ENCODE measurements at regions of chr20 and their contacts with region 1.

Region 1: DNA sequence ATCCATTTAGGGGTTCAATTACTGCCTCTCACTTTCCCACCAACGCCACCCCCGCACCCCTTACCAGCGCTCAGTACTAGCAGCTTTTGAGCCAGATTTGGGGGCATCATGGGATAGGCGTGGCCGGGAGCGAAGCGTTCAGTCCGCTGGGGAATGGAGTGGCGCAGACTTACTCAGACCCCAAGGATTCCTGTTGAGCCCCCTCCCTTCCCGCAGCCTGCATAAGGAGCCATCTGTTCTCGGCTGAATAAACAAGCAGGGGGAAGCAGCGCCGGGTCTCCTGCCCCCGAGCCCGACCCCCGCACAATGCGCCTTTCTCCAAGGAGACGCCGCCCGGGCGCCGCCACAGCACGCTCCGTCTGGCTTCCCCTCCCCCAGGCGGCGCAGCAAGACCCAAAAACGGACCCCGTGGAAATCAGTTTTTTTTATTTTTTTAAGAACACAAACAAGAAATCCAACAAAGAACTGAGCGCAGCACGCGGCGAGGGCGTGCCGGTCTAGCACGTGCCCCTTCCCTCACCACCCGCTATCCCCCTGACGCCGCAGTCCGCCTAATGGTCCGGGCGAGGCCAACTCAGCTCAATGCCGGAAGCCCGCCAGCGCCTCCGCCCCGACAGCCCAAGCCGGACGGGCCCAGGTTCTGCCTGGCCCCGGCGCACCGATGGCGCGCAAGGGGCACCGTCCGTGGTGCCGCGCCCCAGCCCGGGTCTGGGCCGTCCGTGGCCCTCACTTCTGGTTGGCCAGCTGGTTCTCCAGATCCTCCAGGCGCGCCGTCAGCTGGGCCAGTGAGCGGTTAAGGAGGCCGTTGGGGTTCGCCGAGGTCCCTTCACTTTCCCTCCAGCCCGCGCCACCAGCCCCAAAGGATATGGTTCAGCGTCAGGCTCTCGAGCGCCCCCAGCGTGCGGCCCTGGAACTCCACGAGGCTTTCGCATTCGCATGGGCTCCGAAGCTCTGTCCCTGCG is 13.3 kb upstream of the RBPJL start:
- H3K4me3 ChIP-seq: peak overlapping the region; percentile 46
- H3K27ac ChIP-seq: no peak overlapping the region
- H3K4me1 ChIP-seq: no peaks in the 10 kb centered on the region
- CTCF ChIP-seq: peak; percentile 45; the same call in 1 of the 2 replicates

Region 2: GRCh38 chr20:45016089-45016671 is 277.1 kb before region 1 on chr20:
- CTCF ChIA-PET with region 1: interaction called, 36 read pairs
- POLR2A ChIA-PET with region 1: no interaction called
- H3K4me3 ChIP-seq: no peak overlapping the region
- H3K27ac ChIP-seq: peak overlapping the region; percentile 22; the same call in 1 of the 2 replicates
- H3K4me1 ChIP-seq: peaks cover 55% of the 10 kb centered on the region
- CTCF ChIP-seq: no peak

Region 3: DNA sequence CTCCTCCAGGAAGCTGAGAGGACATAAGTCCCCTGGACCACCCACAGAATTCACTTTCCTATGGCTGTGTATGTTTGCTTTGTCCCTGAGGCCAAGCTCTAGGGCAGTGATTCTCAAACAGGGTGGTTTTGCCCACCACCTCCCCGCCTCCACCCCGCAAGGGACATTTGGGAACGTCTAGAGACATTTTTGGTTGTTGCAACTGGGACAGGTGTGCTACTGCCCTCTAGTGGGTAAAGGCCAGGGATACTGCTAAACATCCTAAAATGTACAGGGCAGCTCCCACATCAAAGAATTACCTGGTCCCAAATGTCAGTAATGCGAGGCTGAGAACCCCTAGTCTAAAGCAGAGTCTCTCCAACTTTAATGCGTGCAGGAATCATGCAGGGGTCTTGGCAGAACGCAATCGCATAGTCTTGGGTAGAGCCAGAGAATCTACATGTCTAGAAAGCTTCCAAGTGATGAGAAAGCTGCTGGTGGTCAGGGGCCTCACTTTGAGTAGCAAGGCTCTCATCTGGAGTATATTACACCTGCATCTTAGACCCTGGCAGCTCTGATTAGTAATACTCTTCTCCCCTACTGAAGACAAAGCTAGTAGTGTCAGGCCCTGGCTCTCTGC is 197.5 kb before region 1 on chr20:
- CTCF ChIA-PET with region 1: interaction called, 31 read pairs
- POLR2A ChIA-PET with region 1: interaction called, 4 read pairs
- H3K4me3 ChIP-seq: no peak overlapping the region
- H3K27ac ChIP-seq: no peak overlapping the region
- H3K4me1 ChIP-seq: no peaks in the 10 kb centered on the region
- CTCF ChIP-seq: peak; percentile 61; the same call in 1 of the 2 replicates

Region 4: GRCh38 chr20:45111799-45112471 is 181.4 kb before region 1 on chr20:
- CTCF ChIA-PET with region 1: interaction called, 18 read pairs
- POLR2A ChIA-PET with region 1: no interaction called
- H3K4me3 ChIP-seq: no peak overlapping the region
- H3K27ac ChIP-seq: no peak overlapping the region
- H3K4me1 ChIP-seq: no peaks in the 10 kb centered on the region
- CTCF ChIP-seq: no peak

Region 5: DNA sequence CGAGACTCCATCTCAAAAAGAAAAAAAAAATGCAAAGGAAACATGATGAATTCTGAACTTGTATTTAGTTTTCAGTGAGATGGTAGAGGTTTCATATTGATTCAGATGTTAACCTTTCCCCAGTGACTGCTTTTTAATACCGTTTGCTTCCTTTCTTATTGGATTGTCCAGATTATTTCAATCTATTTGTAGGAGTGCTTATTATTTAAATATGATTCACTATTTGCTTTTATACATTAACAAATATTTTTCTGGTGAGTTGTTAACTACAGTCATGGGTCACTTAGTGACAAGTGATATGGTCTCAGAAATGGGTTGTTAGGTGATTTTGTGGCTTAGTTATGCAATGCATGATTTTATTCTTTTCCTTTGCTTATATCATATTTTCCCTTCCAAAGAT is 110.2 kb before region 1 on chr20:
- CTCF ChIA-PET with region 1: no interaction called
- POLR2A ChIA-PET with region 1: no interaction called
- H3K4me3 ChIP-seq: no peak overlapping the region
- H3K27ac ChIP-seq: no peak overlapping the region
- H3K4me1 ChIP-seq: no peaks in the 10 kb centered on the region
- CTCF ChIP-seq: no peak

Region 6: DNA sequence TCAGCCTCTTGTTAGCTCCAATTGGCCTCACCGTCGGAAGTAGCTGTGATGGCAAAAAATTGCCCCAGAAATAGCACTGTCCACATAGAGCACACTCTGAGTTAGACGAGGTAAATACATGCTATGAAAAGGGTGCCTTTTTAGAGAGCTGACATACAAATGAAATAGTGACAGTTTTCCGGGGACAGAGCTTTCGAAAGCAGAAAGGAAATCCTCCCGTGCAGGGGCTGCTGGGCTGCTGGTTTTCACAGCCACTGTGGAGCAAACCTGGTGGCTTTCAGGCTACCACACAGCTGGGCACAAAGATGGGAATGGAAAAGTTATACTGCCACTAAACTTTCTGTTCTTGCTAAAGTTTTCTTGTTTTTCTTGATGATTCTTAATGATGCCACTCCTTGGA is 47.2 kb before region 1 on chr20:
- CTCF ChIA-PET with region 1: interaction called, 15 read pairs
- POLR2A ChIA-PET with region 1: no interaction called
- H3K4me3 ChIP-seq: no peak overlapping the region
- H3K27ac ChIP-seq: no peak overlapping the region
- H3K4me1 ChIP-seq: peaks cover 23% of the 10 kb centered on the region
- CTCF ChIP-seq: no peak

Region 7: DNA sequence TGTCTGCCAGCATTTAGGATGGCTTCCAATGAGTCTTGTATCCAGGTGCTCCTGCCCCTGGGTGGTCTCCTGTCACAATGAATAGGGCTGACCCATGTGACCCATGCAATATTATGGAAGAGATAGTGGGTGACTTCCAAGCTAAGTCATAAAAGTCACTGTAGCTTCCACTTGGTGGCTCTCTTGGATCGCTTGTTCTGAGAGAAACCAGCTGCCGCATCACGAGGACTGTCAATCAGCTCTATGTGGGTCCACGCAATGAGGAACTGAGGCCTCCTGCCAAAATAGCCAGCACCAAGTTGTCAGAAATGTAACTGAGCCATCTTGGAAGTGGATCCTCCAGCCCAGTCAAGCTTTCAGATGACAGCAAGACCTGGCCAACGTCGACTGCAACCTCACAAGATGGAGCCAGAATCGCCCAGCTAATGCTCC is 29.6 kb after region 1 on chr20:
- CTCF ChIA-PET with region 1: interaction called, 11 read pairs
- POLR2A ChIA-PET with region 1: interaction called, 3 read pairs
- H3K4me3 ChIP-seq: no peak overlapping the region
- H3K27ac ChIP-seq: no peak overlapping the region
- H3K4me1 ChIP-seq: no peaks in the 10 kb centered on the region; the same call in 1 of the 2 replicates
- CTCF ChIP-seq: peak; percentile 35; the same call in 1 of the 2 replicates